Activated T-helper 1 cell treated with anti-CD3 and anti-CD28 coated beads, Interleukin-12 subunit alpha, Interleukin-12 subunit beta, Interleukin-2, Interleukin-4 antibody, amounts not matched to agents 30 ng/mL and 10 ng/mL and 1 ng/mL, durations not matched to agents 14 hours and 24 hours and 36 hours (primary cell): ENCODE measurements at regions of chr19 and their contacts with region 1.

Region 1: GRCh38 chr19:7340959-7341837 is 7.5 kb upstream of the ARHGEF18 start:
- DNase-seq: peak; percentile 70
- H3K4me3 Mint-ChIP-seq: no peak overlapping the region
- H3K27ac Mint-ChIP-seq: no peak overlapping the region
- H3K4me1 Mint-ChIP-seq: peaks cover 44% of the 10 kb centered on the region
- H3K27me3 Mint-ChIP-seq: peaks cover 5% of the 10 kb centered on the region

Region 2: DNA sequence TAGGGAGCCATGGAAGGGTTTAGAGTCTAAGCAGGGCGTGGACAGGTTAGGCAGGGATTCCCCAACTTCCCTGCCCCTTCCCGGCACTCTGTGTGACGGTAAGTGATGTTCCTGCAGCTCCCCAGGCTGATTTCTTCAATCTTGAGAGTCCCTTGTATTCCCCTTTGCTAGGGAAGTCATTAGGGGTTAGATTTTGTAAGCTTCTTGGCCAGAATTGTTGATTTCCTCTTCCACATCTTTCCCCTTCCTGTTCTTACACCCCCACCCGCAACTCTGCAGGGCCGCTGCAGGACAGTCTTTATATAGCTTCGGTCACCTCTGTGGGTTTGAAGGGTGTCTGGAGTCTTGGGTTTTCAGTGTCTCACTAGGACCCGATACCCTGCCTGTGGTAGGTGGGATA is 464.4 kb before region 1 on chr19:
- intact Hi-C with region 1: no loop called
- DNase-seq: no peak
- H3K4me3 Mint-ChIP-seq: no peak overlapping the region
- H3K27ac Mint-ChIP-seq: no peak overlapping the region
- H3K4me1 Mint-ChIP-seq: peaks cover 6% of the 10 kb centered on the region
- H3K27me3 Mint-ChIP-seq: peaks cover 13% of the 10 kb centered on the region

Region 3: GRCh38 chr19:7004313-7004931 is 336.8 kb before region 1 on chr19:
- intact Hi-C with region 1: loop called (anchors 1 kb)
- DNase-seq: no peak
- H3K4me3 Mint-ChIP-seq: no peak overlapping the region
- H3K27ac Mint-ChIP-seq: no peak overlapping the region
- H3K4me1 Mint-ChIP-seq: peaks cover 16% of the 10 kb centered on the region
- H3K27me3 Mint-ChIP-seq: no peaks in the 10 kb centered on the region

Region 4: GRCh38 chr19:7149956-7150705 is 191.1 kb before region 1 on chr19:
- intact Hi-C with region 1: loop called (anchors 1 kb)
- DNase-seq: no peak
- H3K4me3 Mint-ChIP-seq: no peak overlapping the region
- H3K27ac Mint-ChIP-seq: no peak overlapping the region
- H3K4me1 Mint-ChIP-seq: no peaks in the 10 kb centered on the region
- H3K27me3 Mint-ChIP-seq: peaks cover 1% of the 10 kb centered on the region